AG04449 (cell line): ENCODE measurements at regions of chr6 and their contacts with region 1.

Region 1: GRCh38 chr6:142207265-142207877 is 60.3 kb downstream of the VTA1 start:
- DNase-seq: no peak
- H3K4me3 ChIP-seq: no peak overlapping the region
- CTCF ChIP-seq: peak; percentile 72

Region 2: DNA sequence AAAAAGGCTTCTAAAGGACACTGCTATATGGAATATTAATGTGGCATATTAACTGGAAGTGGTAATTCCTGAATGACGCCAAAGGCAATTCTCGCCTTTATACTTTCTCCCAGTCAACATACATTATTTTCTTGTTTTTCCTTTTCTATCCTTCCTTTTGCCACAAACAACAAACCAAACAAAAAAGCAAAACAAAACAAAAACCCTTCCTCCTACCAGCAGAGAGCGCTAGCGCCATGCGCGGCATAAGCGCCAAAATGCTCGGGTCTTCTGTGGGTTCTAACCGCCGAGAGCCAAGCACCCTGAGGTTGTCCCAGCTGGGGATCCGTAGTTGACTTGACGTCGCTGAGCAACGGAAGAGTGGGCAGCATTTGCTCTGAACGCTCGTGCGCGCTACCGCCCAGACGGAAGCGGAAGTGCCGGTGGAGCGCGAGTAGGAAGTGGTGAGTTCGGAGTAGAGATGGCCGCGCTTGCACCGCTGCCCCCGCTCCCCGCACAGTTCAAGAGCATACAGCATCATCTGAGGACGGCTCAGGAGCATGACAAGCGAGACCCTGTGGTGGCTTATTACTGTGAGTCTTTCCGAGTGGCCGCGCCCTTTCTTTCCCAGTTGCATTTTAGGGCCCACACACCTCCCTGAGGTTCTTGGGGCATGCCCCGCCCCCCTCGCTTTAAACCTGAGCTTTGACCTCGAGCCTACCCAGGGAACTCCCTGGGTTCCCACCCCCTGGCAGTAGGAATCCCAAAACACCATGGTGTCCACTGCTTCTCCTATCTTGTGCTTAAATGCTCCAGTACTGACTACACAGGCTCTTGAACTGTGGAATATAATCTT is 60.3 kb before region 1 on chr6 and contains the starts of genes NMBR and VTA1:
- CTCF ChIA-PET with region 1: interaction called, 28 read pairs
- POLR2A ChIA-PET with region 1: no interaction called
- DNase-seq: peak; percentile 96
- H3K4me3 ChIP-seq: peak within 1 kb of the TSS; percentile 97
- CTCF ChIP-seq: peak; percentile 85

Region 3: GRCh38 chr6:142167486-142167885 is 39.9 kb before region 1 on chr6:
- CTCF ChIA-PET with region 1: interaction called, 10 read pairs
- POLR2A ChIA-PET with region 1: no interaction called
- DNase-seq: no peak
- H3K4me3 ChIP-seq: no peak overlapping the region
- CTCF ChIP-seq: no peak

Region 4: GRCh38 chr6:142187209-142187608 is 20.2 kb before region 1 on chr6:
- CTCF ChIA-PET with region 1: interaction called, 14 read pairs
- POLR2A ChIA-PET with region 1: no interaction called
- DNase-seq: no peak
- H3K4me3 ChIP-seq: no peak overlapping the region
- CTCF ChIP-seq: no peak

Region 5: DNA sequence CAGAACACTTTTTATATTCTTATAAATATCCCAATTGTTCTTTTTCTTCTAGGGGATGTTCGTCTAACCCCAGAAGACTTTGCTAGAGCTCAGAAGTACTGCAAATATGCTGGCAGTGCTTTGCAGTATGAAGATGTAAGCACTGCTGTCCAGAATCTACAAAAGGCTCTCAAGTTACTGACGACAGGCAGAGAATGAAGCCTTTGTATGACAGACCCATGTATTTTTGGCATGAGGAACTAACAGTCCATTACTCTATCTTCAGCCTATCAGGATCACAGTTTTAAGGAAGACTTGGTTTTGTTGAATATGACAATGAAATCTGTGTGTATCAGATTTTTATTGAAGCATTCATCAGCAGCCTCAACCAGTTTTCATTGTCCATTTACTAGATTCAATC is 11.1 kb after region 1 on chr6:
- CTCF ChIA-PET with region 1: interaction called, 26 read pairs
- POLR2A ChIA-PET with region 1: no interaction called
- DNase-seq: no peak
- H3K4me3 ChIP-seq: no peak overlapping the region
- CTCF ChIP-seq: no peak

Region 6: DNA sequence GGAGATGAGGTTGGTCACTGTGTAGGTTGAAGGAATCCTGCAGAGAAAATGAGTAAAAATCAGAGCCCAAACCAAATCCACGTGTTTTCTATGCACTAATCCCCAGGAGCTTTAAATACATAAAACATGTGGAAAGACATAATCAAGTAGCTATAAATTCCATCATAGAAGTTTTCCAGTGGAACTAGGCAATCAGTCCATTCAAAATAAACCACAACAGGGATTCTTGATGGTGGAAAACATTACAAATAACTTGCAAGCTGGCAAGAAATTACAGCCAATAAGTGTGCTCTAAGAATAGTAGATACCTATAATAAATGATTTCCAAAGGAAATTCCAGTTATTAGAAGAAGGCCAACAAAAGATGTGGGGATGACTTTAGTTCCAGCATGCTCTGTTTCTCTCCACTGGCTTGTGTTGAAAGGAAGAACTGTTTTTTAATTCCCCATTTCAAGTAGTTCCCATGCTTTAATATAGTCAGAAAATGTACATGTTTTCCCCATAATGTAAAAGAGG is 44.6 kb after region 1 on chr6:
- CTCF ChIA-PET with region 1: no interaction called
- POLR2A ChIA-PET with region 1: no interaction called
- DNase-seq: no peak
- H3K4me3 ChIP-seq: no peak overlapping the region
- CTCF ChIP-seq: no peak

Region 7: DNA sequence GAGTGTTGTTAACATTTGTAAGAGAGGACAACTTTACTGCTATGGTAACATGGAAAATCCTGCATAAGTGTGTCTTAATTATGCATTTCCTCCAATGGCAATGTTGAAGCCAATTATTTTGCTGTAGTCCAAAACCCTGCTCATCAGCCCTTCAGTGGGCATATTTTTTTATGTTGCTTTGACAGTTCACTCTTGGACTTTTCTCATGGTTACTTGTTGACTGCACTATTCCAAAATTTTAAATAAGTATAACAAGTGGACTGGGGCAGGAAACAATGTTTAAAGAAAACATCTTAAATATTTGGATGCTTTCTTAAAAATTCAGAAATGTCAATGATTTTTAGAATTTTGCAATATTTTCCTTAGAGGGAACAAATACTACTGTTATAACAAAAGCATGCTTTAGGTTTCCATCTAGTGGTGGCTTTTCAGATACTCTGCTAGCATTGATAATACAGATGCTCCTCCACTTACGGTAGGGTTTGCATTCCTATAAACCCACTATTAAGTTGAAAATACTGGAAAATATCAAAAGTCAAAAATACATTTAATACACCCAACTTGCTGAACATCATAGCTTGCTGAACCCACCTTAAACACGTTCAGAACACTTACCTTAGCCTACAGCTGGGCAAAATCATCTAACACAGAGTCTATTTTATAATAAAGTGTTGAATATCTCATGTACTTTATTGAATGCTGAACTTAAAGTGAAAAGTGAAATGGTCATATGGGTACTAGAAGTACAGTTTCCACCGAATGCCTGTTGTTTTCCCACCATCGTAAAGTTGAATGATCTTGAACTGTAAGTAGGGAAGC is 180.8 kb after region 1 on chr6:
- CTCF ChIA-PET with region 1: interaction called, 16 read pairs
- POLR2A ChIA-PET with region 1: no interaction called
- DNase-seq: no peak
- H3K4me3 ChIP-seq: no peak overlapping the region
- CTCF ChIP-seq: peak; percentile 59